ENCODE measurements at regions of chr14 and their contacts with region 1.

Region 1: DNA sequence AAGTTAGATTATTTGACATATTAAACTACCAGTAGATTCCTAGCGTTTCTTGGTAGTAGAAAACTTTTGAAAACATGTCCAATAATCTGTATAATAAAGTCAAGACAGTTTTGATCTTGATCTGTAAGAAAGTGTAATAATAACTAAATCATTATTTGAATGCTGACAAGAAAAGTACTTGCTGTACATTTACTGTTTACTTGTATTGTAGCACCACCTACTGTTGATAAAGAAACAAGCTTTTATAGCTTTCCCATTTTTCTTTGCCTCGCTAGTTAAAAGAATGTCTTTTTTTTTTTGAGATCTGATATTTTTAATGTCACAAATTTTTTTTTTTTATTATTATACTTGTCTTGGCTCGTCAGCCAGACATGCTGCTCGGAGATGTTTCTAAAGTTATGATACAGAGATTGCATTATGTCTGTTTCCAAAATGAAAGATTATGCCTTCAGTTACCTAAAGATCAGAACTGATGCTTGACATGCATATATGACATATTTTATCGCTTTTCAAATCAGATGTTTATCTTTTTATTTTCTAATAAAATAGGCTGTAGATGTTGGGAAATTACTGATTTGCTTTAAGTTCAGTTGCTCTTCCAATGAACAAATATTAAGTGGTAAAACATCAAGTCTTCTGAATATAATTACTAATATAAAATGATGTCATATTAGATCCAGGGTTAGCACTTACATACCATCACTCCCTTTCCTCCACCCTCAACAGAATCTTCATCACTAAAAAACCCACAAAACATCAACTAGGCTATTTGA is 140.5 kb downstream of the AKAP6 start:
- DNase-seq: no peak
- ATAC-seq: no peak
- H3K4me3 ChIP-seq: no peak overlapping the region
- H3K27ac ChIP-seq: peak overlapping the region in 2 of 4 donors; percentile 75 to 77
- H3K4me1 ChIP-seq: peaks cover 37 to 50% of the 10 kb centered on the region in 2 donors
- H3K27me3 ChIP-seq: no peaks in the 10 kb centered on the region
- CTCF ChIP-seq: peak; percentile 23 to 56 (median 49)
- POLR2A ChIP-seq: no peak

Region 2: DNA sequence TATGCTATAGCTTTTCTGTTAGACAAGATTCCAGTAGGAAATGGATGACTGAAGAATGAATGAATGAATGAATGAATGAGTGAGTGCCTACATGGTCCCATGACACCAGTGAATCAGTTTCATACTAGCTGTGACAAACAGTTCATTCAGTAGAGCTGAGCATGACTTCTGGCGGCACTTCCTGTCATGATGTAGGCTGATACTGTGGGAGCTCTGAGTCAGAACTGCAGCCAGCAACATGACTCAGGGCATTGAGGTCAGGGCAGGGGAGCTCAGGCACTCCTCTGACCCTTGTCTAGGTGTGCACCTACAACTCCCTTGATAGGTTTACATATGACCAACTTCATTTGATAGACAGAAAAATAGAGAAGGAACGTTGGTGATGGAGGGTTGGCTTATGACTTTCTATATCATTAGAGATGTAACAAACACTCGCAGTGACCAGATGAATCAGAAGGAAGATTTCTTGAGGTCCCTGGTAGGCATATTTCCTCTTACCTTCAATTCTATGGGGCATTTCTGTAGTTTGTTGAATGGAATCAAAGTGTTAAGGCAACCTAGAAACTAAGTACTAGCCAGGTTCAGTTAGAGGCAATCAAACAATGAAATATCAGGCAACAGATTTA is 531.7 kb before region 1 on chr14:
- in situ Hi-C with region 1: no loop called
- intact Hi-C with region 1: loop called (anchors 5 kb)
- DNase-seq: peak; percentile 41 to 51
- ATAC-seq: peak; percentile 90
- H3K4me3 ChIP-seq: no peak overlapping the region
- H3K27ac ChIP-seq: peak overlapping the region in 1 of 4 donors; percentile 3
- H3K4me1 ChIP-seq: peaks cover 0 to 8% of the 10 kb centered on the region in 2 donors
- H3K27me3 ChIP-seq: no peaks in the 10 kb centered on the region
- CTCF ChIP-seq: no peak
- POLR2A ChIP-seq: no peak

Region 3: GRCh38 chr14:32076278-32077080 is 393.1 kb before region 1 on chr14:
- in situ Hi-C with region 1: loop called in 3 of 4 experiments (anchors 10 to 25 kb)
- intact Hi-C with region 1: loop called (anchors 1 kb)
- DNase-seq: peak; percentile 93 to 96
- ATAC-seq: peak; percentile 87 to 89
- H3K4me3 ChIP-seq: peak overlapping the region; percentile 89 to 99 (median 96)
- H3K27ac ChIP-seq: peak overlapping the region; percentile 98 to 100 (median 100)
- H3K4me1 ChIP-seq: peaks cover 27 to 42% of the 10 kb centered on the region in 2 donors
- H3K27me3 ChIP-seq: no peaks in the 10 kb centered on the region
- CTCF ChIP-seq: no peak
- POLR2A ChIP-seq: peak; percentile 64 to 65

Region 4: GRCh38 chr14:32252030-32252670 is 217.4 kb before region 1 on chr14:
- in situ Hi-C with region 1: loop called in 2 of 4 experiments (anchors 5 kb)
- intact Hi-C with region 1: loop called (anchors 2 kb)
- DNase-seq: peak; percentile 40 to 45
- ATAC-seq: peak; percentile 85 to 93
- H3K4me3 ChIP-seq: no peak overlapping the region
- H3K27ac ChIP-seq: peak overlapping the region in 1 of 4 donors; percentile 40
- H3K4me1 ChIP-seq: peaks cover 7 to 15% of the 10 kb centered on the region in 2 donors
- H3K27me3 ChIP-seq: no peaks in the 10 kb centered on the region
- CTCF ChIP-seq: peak; percentile 50 to 89 (median 79)
- POLR2A ChIP-seq: no peak

Region 5: DNA sequence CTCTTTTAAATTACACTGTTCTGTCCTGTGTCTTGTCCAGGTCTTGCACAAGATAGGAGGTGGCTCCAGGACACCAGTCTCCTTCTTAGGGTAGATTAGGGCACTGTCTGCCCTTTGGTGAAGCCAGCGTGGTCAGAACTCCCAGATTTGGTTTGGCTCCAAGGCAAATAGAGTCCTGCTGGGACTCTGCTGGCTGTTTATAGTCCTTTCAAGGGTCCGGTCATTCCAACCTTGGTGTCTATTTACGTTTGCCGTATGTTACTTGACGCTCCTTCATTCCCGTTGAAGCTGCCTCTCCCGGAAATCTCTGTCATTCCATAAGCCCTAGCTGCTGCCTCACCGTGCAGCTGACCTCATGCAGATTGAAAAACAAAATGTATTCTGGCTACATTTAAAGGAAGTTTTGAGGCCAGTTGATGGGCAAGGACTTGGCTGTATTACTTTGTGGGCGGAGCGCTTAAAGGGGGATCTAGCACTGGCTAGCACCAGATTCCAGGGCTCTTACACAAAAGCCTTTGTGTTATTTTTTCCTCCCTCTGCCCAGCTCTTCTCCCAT is 40.1 kb after region 1 on chr14:
- in situ Hi-C with region 1: no loop called
- intact Hi-C with region 1: loop called (anchors 1 kb)
- DNase-seq: peak; percentile 76 to 90
- ATAC-seq: peak; percentile 77 to 80
- H3K4me3 ChIP-seq: peak overlapping the region; percentile 7 to 39 (median 22)
- H3K27ac ChIP-seq: peak overlapping the region; percentile 78 to 94 (median 90)
- H3K4me1 ChIP-seq: peaks cover 72 to 78% of the 10 kb centered on the region in 2 donors
- H3K27me3 ChIP-seq: no peaks in the 10 kb centered on the region
- CTCF ChIP-seq: no peak
- POLR2A ChIP-seq: peak in 1 of 2 donors; percentile 61